Spleen (tissue), 13 donors: ENCODE measurements at regions of chr17 and their contacts with region 1.

Region 1: DNA sequence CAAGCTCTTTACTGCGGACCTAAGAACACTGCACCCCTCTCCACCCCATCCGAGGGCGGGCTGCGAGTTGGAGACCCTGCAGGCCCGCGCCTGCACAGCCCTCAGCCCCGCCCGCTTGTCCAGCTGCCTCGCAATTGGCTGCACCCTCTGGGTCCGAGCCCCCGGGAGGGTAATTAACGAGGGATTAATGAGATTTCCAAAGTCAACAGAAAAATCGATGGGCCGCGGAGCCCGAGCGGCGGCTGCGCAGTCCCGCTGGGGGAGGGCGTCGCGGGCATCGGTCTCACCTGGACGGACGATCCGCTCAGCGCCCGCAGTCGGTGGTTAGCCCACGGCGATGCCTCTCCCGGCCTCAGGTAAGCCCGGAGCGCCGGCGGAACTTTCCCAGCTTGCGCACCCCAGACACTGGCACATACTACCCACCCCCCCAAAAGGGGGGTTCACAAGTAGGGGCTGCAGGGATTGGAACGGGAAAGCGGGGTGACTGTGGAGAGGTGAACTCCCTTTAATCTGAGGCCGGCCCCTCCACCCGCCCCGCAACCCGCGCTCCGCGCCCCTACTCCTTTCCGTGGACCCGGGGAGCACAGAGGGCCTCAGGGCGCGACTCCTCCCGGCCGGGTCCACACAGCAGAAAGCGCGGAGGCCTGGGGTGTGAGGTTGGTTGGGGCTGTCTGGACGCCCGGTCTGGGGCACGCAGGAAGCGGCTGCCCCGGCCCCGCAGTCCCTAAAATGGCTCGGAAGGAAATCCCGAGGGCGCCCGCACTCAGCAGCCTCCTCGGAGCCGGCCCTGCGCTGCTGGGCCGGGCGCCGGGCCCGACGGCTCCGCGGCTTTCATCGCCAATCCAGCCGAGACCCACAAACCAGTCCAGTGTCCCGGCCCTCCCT is at the start of gene OTOP3:
- DNase-seq: no peak
- H3K4me3 ChIP-seq: peak within 1 kb of the TSS in 2 of 8 donors; percentile 2 to 21
- H3K27ac ChIP-seq: no peak within 1 kb of the TSS
- H3K4me1 ChIP-seq: peaks cover 6 to 13% (median 10%) of the 10 kb centered on the region in 6 donors
- H3K27me3 ChIP-seq: peaks cover 3 to 89% (median 38%) of the 10 kb centered on the region in 7 donors
- CTCF ChIP-seq: peak in 1 of 11 experiments; percentile 11
- POLR2A ChIP-seq: no peak
- total RNA-seq, gene OTOP3: not detected

Region 2: GRCh38 chr17:74566132-74566753 is 369.6 kb before region 1 on chr17:
- intact Hi-C with region 1: no loop called
- DNase-seq: peak; percentile 82
- H3K4me3 ChIP-seq: peak overlapping the region in 2 of 8 donors; percentile 1 to 13
- H3K27ac ChIP-seq: peak overlapping the region in 1 of 8 donors; percentile 83
- H3K4me1 ChIP-seq: peaks cover 0 to 28% (median 0%) of the 10 kb centered on the region in 6 donors
- H3K27me3 ChIP-seq: peaks cover 0 to 82% (median 0%) of the 10 kb centered on the region in 7 donors
- CTCF ChIP-seq: peak in 10 of 11 experiments; percentile 7 to 70 (median 54)
- POLR2A ChIP-seq: no peak

Region 3: DNA sequence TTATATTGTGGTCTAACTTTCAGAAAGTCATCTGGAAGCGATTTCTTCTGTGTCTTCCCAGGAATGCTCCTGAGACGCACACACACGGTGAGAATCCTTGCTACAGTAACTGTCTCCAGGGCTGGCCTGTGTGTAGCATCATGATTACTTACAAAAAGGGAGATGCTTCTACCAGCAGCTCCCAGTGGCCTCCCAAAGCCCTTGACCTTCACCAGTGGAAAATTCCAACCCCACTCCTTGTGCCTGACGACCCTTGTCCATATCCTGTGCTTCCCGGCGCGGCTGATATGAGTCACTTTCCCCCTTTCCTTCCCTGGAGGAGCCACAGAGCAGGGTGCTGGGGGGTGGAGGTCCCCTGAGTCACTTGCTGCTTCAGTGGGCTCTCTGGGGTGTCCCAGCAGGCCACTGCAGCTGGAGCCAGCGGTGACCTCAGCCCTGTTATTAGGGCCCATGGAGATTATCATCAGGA is 137.6 kb before region 1 on chr17:
- intact Hi-C with region 1: loop called (anchors 10 kb)
- DNase-seq: no peak
- H3K4me3 ChIP-seq: no peak overlapping the region
- H3K27ac ChIP-seq: no peak overlapping the region
- H3K4me1 ChIP-seq: no peaks in the 10 kb centered on the region
- H3K27me3 ChIP-seq: no peaks in the 10 kb centered on the region
- CTCF ChIP-seq: no peak
- POLR2A ChIP-seq: no peak

Region 4: GRCh38 chr17:75034236-75034908 is 98.5 kb after region 1 on chr17:
- intact Hi-C with region 1: no loop called
- DNase-seq: peak; percentile 93
- H3K4me3 ChIP-seq: peak overlapping the region; percentile 49 to 81 (median 64)
- H3K27ac ChIP-seq: peak overlapping the region; percentile 69 to 87 (median 84)
- H3K4me1 ChIP-seq: peaks cover 28 to 62% (median 47%) of the 10 kb centered on the region in 6 donors
- H3K27me3 ChIP-seq: peaks cover 0 to 3% (median 0%) of the 10 kb centered on the region in 7 donors
- CTCF ChIP-seq: no peak
- POLR2A ChIP-seq: no peak